ENCODE measurements at regions of chr21 and their contacts with region 1.

Region 1: DNA sequence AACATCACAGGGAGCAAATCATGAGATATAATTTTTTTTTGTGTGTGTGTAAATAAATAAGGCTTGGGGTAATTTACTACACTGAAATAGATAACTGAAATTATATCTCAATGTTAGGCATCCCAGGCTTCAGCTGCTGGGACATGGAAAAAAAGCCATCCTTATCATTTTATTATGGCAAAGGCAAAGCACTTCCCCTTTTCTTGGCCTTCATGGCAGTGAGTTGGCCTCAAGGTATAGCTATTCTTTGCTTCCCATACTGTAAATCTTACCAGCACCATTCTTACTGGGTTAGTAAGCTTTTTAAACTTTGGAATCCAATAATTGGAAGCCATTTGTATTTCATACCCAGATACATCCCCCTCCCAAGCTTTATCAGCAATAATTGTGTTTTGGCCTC is 29.0 kb downstream of the RBM11 start:
- DNase-seq: no peak
- H3K4me3 ChIP-seq: no peak overlapping the region
- H3K27ac ChIP-seq: no peak overlapping the region
- H3K4me1 ChIP-seq: peaks cover 18% of the 10 kb centered on the region
- H3K27me3 ChIP-seq: no peaks in the 10 kb centered on the region
- CTCF ChIP-seq: no peak

Region 2: GRCh38 chr21:14366998-14367397 is 122.1 kb after region 1 on chr21:
- CTCF ChIA-PET with region 1: no interaction called
- POLR2A ChIA-PET with region 1: interaction called, 13 read pairs
- intact Hi-C with region 1: no loop called
- DNase-seq: no peak
- H3K4me3 ChIP-seq: no peak overlapping the region
- H3K27ac ChIP-seq: no peak overlapping the region
- H3K4me1 ChIP-seq: no peaks in the 10 kb centered on the region
- H3K27me3 ChIP-seq: no peaks in the 10 kb centered on the region
- CTCF ChIP-seq: no peak

Measured in A673 (cell line).